PC-9 (cell line): ENCODE measurements at regions of chr11 and their contacts with region 1.

Region 1: DNA sequence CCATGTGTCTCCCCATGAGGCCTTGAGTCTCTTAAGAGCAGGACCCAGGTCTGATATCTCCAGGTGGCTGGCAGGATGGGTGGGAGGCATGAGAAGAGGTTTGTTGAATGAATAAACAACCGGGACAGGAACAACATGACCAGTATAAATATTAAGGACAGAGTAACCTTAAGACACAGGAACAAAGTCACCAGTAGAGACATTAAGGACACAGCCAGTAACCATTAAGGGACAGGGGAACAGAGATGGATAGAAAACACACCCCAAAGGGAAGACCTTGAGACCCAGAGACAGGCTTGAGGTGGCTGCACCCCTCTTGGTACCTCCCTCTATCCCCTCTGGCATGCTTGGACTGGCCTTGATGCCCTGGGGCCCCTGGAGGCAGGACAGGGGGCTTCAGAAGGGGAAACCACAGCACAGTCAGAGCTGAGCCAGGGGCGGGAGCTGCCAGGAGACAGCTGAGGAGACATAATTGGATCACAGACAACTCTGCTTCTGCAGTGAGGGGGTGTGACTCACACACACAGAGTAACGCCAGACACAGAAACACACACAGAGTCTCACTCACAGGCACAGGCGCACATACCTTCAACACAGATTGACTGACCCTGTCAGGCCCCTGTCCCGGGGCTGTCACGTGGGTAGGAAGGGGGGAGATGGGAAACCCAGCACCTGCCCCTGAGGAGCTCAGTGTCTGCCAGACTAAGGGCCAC is 20.7 kb downstream of the STARD10 start:
- DNase-seq: no peak
- H3K4me3 ChIP-seq: no peak overlapping the region
- H3K27ac ChIP-seq: no peak overlapping the region
- H3K4me1 ChIP-seq: peaks cover 18% of the 10 kb centered on the region
- H3K27me3 ChIP-seq: no peaks in the 10 kb centered on the region
- CTCF ChIP-seq: no peak

Region 2: DNA sequence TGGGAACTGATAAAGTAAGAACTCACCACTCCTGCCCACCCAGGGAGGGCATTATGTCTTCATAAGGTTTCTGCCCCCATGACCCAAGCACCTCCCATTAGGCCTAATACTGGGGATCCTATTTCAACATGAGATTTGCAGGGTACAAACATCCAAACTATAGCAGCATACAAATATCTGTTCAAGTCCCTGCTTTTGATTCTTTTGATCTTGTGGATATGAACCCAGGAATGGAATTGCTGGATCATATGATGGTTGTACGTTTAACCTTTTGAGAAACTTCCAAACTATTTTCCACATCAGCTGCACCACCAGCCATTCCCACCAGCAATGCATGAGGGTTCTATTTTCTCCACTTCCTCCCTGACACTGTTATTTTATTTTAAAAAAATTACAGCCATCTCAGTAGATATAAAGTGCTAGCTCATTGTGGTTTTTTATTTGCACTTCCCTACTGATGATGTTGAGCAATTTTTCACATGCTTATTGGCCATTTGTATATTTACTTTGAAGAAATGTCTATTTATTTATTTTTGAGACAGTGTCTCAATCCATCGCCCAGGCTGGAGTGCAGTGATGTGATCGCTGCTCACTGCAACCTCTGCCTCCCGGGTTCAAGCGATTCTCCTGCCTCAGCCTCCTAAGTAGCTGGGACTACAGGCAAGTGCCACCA is 34.0 kb after region 1 on chr11:
- CTCF ChIA-PET with region 1: interaction called, 11 read pairs
- POLR2A ChIA-PET with region 1: no interaction called
- intact Hi-C with region 1: no loop called
- DNase-seq: peak in 1 of 2 experiments; percentile 90
- H3K4me3 ChIP-seq: no peak overlapping the region
- H3K27ac ChIP-seq: peak overlapping the region; percentile 86
- H3K4me1 ChIP-seq: peaks cover 34% of the 10 kb centered on the region
- H3K27me3 ChIP-seq: no peaks in the 10 kb centered on the region
- CTCF ChIP-seq: no peak

Region 3: DNA sequence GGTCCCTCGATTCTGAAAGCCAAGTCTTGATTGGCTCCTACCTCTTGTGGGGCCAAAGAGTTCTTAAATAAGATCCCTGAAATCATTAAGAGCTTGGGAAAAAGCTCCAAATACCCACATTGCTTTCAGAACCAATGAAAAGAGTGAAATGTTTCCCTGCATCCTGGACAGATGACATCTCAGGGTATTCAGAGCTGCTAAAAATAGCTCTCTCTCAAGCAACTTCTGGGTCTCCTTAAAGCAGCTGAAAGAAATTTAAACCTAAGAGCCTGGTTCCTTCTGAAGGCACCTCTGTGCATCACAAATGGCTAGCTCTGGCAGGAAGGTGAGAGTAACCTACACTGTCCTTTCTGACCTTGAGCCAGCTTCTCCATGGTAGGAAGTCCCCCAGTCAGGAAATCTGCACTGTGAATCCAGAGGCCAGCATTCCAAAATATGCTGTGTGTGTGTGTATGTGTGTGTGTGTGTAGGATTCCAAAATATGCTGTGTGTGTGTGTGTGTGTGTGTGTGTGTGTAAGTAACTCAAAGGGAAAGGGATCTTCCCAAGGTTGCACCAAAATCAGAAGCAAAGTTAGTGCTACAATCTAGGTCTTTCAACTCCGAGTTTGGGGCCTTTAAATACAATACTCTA is 653.2 kb after region 1 on chr11:
- CTCF ChIA-PET with region 1: no interaction called
- POLR2A ChIA-PET with region 1: no interaction called
- intact Hi-C with region 1: no loop called
- DNase-seq: no peak
- H3K4me3 ChIP-seq: no peak overlapping the region
- H3K27ac ChIP-seq: no peak overlapping the region
- H3K4me1 ChIP-seq: no peaks in the 10 kb centered on the region
- H3K27me3 ChIP-seq: no peaks in the 10 kb centered on the region
- CTCF ChIP-seq: no peak